ENCODE measurements at regions of chr18 and their contacts with region 1.

Region 1: GRCh38 chr18:49447810-49448745 is 12.4 kb downstream of the DYM start:
- DNase-seq: peak in 6 of 9 experiments; percentile 7 to 75 (median 32)
- ATAC-seq: peak; percentile 52
- H3K4me3 ChIP-seq: no peak overlapping the region
- H3K4me3 Mint-ChIP-seq: no peak overlapping the region
- H3K27ac ChIP-seq: no peak overlapping the region
- H3K27ac Mint-ChIP-seq: no peak overlapping the region
- H3K4me1 ChIP-seq: no peaks in the 10 kb centered on the region
- H3K4me1 Mint-ChIP-seq: peaks cover 31% of the 10 kb centered on the region
- H3K27me3 ChIP-seq: no peaks in the 10 kb centered on the region
- H3K27me3 Mint-ChIP-seq: no peaks in the 10 kb centered on the region
- CTCF ChIP-seq: peak; percentile 71

Region 2: DNA sequence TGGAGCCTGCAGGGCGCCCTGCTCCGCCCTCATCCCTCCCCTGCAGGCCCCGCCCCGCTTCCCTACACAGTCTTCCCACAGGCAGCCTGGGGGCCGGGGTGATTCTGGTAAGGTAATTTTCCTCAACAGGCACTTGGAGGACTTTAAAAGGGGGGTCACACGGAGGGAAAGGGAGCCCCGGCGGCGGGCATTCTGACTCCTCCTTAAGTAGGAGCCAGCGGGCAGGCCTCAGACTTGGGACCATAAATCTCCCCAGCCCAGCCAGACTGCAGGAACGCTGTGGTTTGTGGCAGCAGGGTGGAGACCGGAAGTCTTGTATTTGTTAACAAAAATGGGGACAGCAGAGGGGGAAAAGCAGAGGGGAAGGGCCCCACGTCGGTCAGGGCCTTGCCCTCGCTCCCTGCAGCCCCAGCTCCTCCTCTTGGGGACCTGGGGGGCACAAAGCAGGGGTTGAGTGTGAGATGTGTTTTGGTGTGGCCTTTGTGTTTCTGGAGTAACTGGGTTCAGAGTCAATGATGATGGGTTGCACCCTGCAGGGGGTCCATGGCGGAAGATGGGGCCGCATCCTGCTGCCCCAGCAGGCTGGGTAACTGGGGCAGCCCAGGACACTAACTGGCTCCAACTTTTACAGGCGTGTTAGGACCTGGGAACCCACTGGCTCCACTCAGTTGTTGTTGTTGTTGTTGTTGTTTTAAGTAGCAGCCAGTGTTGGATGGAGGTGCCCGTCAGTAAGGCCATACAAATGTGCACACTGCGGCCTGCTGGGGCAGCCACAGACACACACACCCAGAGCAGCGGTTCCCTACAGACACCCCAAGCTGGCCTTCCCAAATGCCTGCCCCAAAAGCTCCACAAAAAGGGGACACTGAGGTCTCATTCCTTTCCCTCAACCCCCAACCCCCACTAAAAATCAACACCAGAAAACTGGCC is 525.0 kb before region 1 on chr18:
- CTCF ChIA-PET with region 1: no interaction called
- POLR2A ChIA-PET with region 1: no interaction called
- intact Hi-C with region 1: loop called in 1 of 2 experiments (anchors 5 kb)
- DNase-seq: peak in 2 of 9 experiments; percentile 51 to 54
- ATAC-seq: no peak
- H3K4me3 ChIP-seq: peak overlapping the region in 1 of 2 experiments; percentile 12
- H3K4me3 Mint-ChIP-seq: peak overlapping the region; percentile 70
- H3K27ac ChIP-seq: peak overlapping the region in 1 of 2 experiments; percentile 50
- H3K27ac Mint-ChIP-seq: peak overlapping the region; percentile 72
- H3K4me1 ChIP-seq: peaks cover 47% of the 10 kb centered on the region
- H3K4me1 Mint-ChIP-seq: peaks cover 67% of the 10 kb centered on the region
- H3K27me3 ChIP-seq: no peaks in the 10 kb centered on the region
- H3K27me3 Mint-ChIP-seq: no peaks in the 10 kb centered on the region
- CTCF ChIP-seq: no peak

Region 3: GRCh38 chr18:49021433-49022129 is 426.5 kb before region 1 on chr18:
- CTCF ChIA-PET with region 1: no interaction called
- POLR2A ChIA-PET with region 1: no interaction called
- intact Hi-C with region 1: loop called in 1 of 2 experiments (anchors 5 kb)
- DNase-seq: peak in 5 of 9 experiments; percentile 26 to 55 (median 51)
- ATAC-seq: no peak
- H3K4me3 ChIP-seq: no peak overlapping the region
- H3K4me3 Mint-ChIP-seq: no peak overlapping the region
- H3K27ac ChIP-seq: no peak overlapping the region
- H3K27ac Mint-ChIP-seq: no peak overlapping the region
- H3K4me1 ChIP-seq: no peaks in the 10 kb centered on the region
- H3K4me1 Mint-ChIP-seq: peaks cover 6% of the 10 kb centered on the region
- H3K27me3 ChIP-seq: no peaks in the 10 kb centered on the region
- H3K27me3 Mint-ChIP-seq: no peaks in the 10 kb centered on the region
- CTCF ChIP-seq: no peak

Region 4: DNA sequence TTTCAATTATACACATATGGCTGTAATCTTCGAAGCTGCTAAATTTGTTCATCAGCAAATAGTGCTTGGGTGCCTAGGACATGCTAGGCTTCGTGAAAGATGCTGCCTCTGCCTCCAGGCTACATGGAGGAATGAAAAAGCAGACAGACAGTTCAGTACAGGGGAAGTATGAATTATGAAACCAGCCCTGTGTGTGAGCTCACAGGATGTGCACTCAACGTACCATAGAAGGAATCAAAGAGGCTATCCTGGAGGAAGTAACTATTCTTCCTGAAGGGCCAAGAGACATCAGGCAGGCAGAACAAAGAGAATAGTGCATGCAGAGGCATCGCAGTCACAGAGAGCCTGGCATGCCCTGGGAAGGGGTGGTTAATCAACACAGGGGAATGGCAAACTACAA is 49.1 kb before region 1 on chr18:
- CTCF ChIA-PET with region 1: no interaction called
- POLR2A ChIA-PET with region 1: no interaction called
- intact Hi-C with region 1: no loop called
- DNase-seq: peak in 1 of 9 experiments; percentile 7
- ATAC-seq: no peak
- H3K4me3 ChIP-seq: no peak overlapping the region
- H3K4me3 Mint-ChIP-seq: no peak overlapping the region
- H3K27ac ChIP-seq: no peak overlapping the region
- H3K27ac Mint-ChIP-seq: peak overlapping the region; percentile 28
- H3K4me1 ChIP-seq: peaks cover 30% of the 10 kb centered on the region
- H3K4me1 Mint-ChIP-seq: peaks cover 47% of the 10 kb centered on the region
- H3K27me3 ChIP-seq: no peaks in the 10 kb centered on the region
- H3K27me3 Mint-ChIP-seq: no peaks in the 10 kb centered on the region
- CTCF ChIP-seq: no peak

Region 5: DNA sequence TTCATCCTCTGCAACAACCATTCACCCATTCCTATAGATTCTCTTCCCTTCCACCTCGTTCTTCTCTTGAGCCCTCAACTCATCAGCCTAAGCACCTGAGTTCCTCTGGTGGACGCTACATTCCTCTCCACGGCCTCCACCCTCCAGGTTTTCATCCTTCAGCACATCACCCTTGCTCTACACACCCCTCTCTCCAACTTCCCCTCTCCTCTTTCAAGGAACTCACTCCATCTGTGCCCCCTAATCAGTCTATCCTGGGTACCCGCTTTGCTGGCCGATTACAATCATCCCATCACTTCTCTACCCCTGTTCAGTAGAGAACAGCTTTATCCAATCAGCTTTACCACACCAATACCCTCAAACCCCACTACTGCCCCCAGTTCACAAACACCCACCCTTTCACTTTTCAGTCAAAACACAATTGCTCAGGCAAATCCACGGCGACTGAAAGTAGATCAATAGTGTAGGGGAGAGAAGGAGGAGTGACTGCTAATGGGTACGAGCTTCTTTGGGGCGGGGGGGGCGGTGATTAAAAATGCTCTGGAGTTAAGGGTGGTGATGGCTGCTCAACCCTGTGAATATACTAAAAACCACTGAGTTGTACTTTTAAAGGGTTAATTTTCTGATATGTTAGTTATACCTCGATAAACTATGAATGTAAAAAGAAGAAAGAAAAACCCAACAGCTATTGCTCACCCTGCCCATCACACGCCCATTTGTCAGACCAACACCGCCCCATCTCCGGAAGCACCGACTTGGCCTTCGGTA is 11.5 kb after region 1 on chr18:
- CTCF ChIA-PET with region 1: interaction called, 12 read pairs
- POLR2A ChIA-PET with region 1: interaction called, 3 read pairs
- intact Hi-C with region 1: no loop called
- DNase-seq: peak in 4 of 9 experiments; percentile 10 to 54 (median 30)
- ATAC-seq: peak; percentile 9
- H3K4me3 ChIP-seq: peak overlapping the region; percentile 88 to 94
- H3K4me3 Mint-ChIP-seq: peak overlapping the region; percentile 93
- H3K27ac ChIP-seq: peak overlapping the region in 1 of 2 experiments; percentile 74
- H3K27ac Mint-ChIP-seq: peak overlapping the region; percentile 90
- H3K4me1 ChIP-seq: peaks cover 17% of the 10 kb centered on the region
- H3K4me1 Mint-ChIP-seq: peaks cover 52% of the 10 kb centered on the region
- H3K27me3 ChIP-seq: no peaks in the 10 kb centered on the region
- H3K27me3 Mint-ChIP-seq: no peaks in the 10 kb centered on the region
- CTCF ChIP-seq: no peak

Region 6: DNA sequence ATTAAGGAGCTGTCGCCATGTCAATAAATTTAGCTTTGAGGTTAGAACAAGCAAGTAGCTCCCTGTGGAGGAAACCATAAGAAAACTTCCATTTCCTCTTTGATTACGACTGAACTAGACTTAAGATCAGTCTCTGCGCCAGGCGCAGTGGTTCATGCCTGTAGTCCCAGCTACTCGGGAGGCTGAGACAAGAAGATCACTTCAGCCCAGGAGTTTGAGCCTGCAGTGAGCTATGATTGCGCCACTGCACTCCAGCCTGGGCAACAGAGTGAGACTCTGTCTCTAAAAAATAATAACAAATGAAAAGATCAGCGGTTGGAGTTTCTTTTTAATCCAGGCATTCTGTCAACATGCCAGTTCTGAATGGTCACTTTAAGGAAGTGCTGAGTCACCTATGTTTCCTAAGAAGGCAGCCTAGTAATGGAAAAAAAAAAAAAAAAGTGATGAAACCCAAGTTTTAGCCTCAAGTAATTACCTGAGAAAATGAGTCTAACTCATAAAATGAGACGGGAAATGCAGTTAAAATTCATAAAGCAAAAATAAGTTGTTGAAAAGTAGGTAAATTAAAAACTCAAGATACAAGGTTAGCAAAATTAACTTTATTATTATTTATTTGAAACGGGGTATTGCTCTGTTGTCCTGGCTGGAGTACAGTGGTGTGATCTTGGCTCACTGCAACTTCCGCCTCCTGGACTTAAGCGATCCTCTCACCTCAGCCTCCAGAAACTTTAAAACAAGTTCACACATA is 28.8 kb after region 1 on chr18:
- CTCF ChIA-PET with region 1: no interaction called
- POLR2A ChIA-PET with region 1: no interaction called
- intact Hi-C with region 1: no loop called
- DNase-seq: no peak
- ATAC-seq: no peak
- H3K4me3 ChIP-seq: no peak overlapping the region
- H3K4me3 Mint-ChIP-seq: no peak overlapping the region
- H3K27ac ChIP-seq: no peak overlapping the region
- H3K27ac Mint-ChIP-seq: peak overlapping the region; percentile 74
- H3K4me1 ChIP-seq: no peaks in the 10 kb centered on the region
- H3K4me1 Mint-ChIP-seq: peaks cover 8% of the 10 kb centered on the region
- H3K27me3 ChIP-seq: no peaks in the 10 kb centered on the region
- H3K27me3 Mint-ChIP-seq: no peaks in the 10 kb centered on the region
- CTCF ChIP-seq: no peak

Region 7: DNA sequence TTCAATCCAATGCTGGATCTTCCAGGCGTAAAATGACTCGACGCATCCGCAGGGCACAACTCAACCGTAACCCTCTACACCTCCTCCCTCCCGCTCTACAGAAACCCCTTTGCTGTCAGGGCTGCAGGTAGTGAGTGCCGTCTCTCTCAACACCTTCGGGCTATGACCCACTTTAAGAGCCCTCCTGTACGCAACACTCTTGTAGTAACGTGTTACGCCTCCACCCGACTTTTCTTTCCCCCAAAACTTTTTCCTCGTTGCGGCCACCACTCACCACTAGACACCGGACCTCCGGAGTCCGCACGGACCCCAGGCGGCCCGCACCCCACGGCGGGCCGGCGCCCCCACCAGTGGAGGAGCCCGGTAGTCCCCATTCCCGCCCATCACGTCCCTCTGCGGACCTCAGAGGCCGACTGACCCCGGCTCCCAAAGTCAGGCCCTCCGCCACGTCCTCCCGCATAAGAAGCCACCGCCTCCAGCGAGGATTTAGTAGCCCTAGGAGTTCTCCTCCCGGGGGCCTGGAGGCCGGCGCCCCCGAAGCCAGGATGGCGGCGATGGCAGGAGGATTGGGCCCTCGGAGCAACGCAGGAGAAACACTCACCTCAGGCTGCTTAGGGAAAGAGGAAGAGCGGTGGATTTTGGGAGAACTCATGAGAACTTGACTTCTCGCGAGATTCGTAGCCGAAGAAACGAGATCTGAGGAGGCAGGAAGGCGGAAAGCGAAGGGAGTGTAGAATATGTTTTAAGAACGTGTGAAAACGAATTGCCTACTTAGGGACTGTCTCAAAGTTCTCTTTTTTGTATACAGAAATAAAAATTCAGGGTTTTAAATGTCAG is 44.0 kb after region 1 on chr18:
- CTCF ChIA-PET with region 1: no interaction called
- POLR2A ChIA-PET with region 1: no interaction called
- intact Hi-C with region 1: no loop called
- DNase-seq: peak; percentile 69 to 98 (median 84)
- ATAC-seq: peak; percentile 77
- H3K4me3 ChIP-seq: peak within 1 kb of the TSS; percentile 86 to 95
- H3K4me3 Mint-ChIP-seq: peak within 1 kb of the TSS; percentile 97
- H3K27ac ChIP-seq: peak within 1 kb of the TSS; percentile 78 to 94
- H3K27ac Mint-ChIP-seq: peak within 1 kb of the TSS; percentile 98
- H3K4me1 ChIP-seq: peaks cover 33% of the 10 kb centered on the region
- H3K4me1 Mint-ChIP-seq: peaks cover 49% of the 10 kb centered on the region
- H3K27me3 ChIP-seq: no peaks in the 10 kb centered on the region
- H3K27me3 Mint-ChIP-seq: no peaks in the 10 kb centered on the region
- CTCF ChIP-seq: no peak